Activated T-helper 2 cell treated with anti-CD3 and anti-CD28 coated beads, Interferon-gamma antibody, Interleukin-2, Interleukin-4, amounts not matched to agents 10 μg/mL and 5 μg/mL and 100 μg/mL, durations not matched to agents 14 hours and 24 hours and 36 hours (primary cell): ENCODE measurements at regions of chr4 and their contacts with region 1.

Region 1: DNA sequence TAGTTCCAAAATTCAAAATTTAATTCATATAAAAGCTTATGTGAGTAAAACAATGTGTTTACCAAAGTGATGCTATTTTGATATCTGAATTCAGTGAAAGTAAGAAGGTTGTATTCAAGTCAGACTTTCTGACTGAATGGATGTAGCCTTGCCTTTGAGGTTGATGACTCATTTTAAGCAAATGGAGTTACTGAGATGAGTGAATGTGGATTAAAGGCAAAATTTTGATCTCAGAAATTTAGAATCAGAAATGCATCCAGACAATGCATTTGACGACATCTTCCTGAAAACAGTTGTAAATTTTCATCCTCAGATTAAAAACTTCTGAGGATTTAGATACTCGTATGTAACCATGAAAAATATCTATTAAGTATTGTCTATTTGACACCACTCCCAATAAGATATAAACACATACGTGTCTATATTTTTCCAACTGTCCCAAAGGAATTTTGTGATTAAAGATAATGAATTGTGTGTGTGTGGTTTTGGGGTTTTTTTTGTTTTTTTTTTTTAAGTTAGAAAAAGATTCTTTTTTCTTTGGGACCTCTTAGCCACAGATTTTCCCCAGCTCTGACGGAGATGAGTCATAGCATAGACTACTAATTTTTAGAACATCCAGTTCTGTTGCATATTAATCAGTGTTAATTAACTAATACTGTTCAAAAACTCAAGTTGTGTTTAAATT is 34.4 kb downstream of the NFKB1 start:
- DNase-seq: no peak
- H3K4me3 Mint-ChIP-seq: peak overlapping the region; percentile 5
- H3K27ac Mint-ChIP-seq: peak overlapping the region; percentile 55
- H3K4me1 Mint-ChIP-seq: peaks cover 54% of the 10 kb centered on the region
- H3K27me3 Mint-ChIP-seq: no peaks in the 10 kb centered on the region

Region 2: DNA sequence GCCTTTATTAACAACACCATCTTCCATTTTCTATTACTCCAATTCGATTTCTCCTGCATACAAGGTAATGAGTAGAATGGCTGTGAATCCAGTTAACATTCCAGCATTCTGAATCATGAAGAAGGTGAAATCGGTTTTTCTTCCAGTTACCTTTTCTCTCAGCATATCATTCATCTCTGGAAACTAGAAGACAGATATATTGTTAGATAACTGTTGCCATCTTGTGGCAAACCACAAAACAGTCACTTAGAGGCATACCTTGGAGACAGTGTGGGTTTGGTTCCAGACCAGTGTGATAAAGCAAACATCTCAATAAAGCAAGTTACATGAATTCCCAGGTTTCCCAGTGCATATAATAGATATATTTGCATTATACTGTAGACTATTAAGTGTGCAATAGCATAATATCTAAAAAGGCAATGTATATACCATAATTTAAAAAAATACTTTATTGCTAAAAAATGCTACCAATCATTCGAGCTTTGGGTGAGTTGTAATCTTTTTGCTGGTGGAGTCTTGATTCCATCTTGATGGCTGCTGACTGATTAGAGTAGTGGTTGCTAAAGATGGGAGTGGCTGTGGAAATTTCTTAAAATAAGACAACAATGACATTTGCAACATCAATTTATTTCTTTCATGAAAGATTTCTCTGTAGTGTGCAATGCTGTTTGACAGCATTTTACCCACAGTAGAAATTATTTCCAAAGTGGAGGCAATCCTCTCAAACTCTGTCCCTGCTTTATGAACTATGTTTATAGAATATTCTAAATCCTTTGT is 272.3 kb before region 1 on chr4:
- intact Hi-C with region 1: loop called (anchors 1 kb)
- DNase-seq: no peak
- H3K4me3 Mint-ChIP-seq: no peak overlapping the region
- H3K27ac Mint-ChIP-seq: no peak overlapping the region
- H3K4me1 Mint-ChIP-seq: peaks cover 23% of the 10 kb centered on the region
- H3K27me3 Mint-ChIP-seq: no peaks in the 10 kb centered on the region

Region 3: GRCh38 chr4:102477657-102478056 is 57.9 kb before region 1 on chr4:
- intact Hi-C with region 1: no loop called
- DNase-seq: no peak
- H3K4me3 Mint-ChIP-seq: no peak overlapping the region
- H3K27ac Mint-ChIP-seq: no peak overlapping the region
- H3K4me1 Mint-ChIP-seq: peaks cover 14% of the 10 kb centered on the region
- H3K27me3 Mint-ChIP-seq: peaks cover 3% of the 10 kb centered on the region

Region 4: GRCh38 chr4:102525097-102525496 is 10.4 kb before region 1 on chr4:
- intact Hi-C with region 1: loop called (anchors 1 kb)
- DNase-seq: no peak
- H3K4me3 Mint-ChIP-seq: no peak overlapping the region
- H3K27ac Mint-ChIP-seq: peak overlapping the region; percentile 53
- H3K4me1 Mint-ChIP-seq: peaks cover 83% of the 10 kb centered on the region
- H3K27me3 Mint-ChIP-seq: no peaks in the 10 kb centered on the region

Region 5: DNA sequence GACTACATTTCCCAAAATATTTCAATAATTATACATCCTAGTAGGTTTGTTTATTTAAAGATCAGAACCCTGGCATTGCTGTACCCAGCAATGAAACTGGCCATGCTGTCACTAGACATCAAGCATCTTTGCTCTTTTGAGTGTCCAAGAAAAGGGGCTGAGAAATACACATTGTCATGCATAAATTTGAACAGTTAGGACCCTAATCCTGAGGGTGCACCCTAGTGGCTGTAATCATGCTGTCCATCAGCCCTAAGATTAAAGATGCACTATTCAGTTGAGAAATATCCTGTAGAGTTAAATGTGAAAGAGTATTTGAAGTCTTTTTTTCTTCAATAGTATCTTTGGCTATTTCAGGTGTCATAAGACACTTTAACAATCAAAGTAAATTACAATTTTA is 74.5 kb after region 1 on chr4:
- intact Hi-C with region 1: loop called (anchors 2 kb)
- DNase-seq: no peak
- H3K4me3 Mint-ChIP-seq: no peak overlapping the region
- H3K27ac Mint-ChIP-seq: peak overlapping the region; percentile 39
- H3K4me1 Mint-ChIP-seq: peaks cover 76% of the 10 kb centered on the region
- H3K27me3 Mint-ChIP-seq: no peaks in the 10 kb centered on the region